ENCODE measurements at regions of chr12 and their contacts with region 1.

Region 1: DNA sequence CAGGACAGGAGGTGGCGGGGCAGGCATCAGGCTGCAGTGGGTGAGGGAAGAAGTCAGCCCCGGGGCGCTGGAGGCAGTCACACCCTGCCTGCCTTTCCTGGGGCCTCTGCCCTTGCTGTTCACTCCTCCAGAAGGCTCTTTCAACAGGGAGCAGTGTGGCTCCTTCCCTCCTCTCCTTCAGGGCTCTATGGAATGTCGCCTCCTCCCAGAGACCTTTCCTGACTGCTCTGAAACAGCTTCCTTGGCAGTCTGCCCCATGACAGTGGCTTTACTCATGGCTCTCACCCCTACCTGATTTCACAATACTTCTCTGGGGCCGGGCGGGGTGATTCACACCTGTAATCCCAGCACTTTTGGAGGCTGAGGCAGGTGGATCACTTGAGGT is 7.1 kb downstream of the RHOF start:
- DNase-seq: no peak
- ATAC-seq: no peak
- H3K4me3 ChIP-seq: no peak overlapping the region
- H3K4me3 Mint-ChIP-seq: peak overlapping the region; percentile 78
- H3K27ac ChIP-seq: peak overlapping the region; percentile 76 to 100
- H3K27ac Mint-ChIP-seq: peak overlapping the region; percentile 95
- H3K4me1 ChIP-seq: peaks cover 87 to 98% of the 10 kb centered on the region in 2 donors
- H3K4me1 Mint-ChIP-seq: peaks cover 89% of the 10 kb centered on the region
- H3K27me3 ChIP-seq: no peaks in the 10 kb centered on the region
- H3K27me3 Mint-ChIP-seq: no peaks in the 10 kb centered on the region
- CTCF ChIP-seq: no peak

Region 2: GRCh38 chr12:121724930-121725329 is 61.5 kb before region 1 on chr12:
- CTCF ChIA-PET with region 1: no interaction called
- POLR2A ChIA-PET with region 1: interaction called, 11 read pairs
- intact Hi-C with region 1: no loop called
- DNase-seq: no peak
- ATAC-seq: no peak
- H3K4me3 ChIP-seq: no peak overlapping the region
- H3K4me3 Mint-ChIP-seq: no peak overlapping the region
- H3K27ac ChIP-seq: no peak overlapping the region
- H3K27ac Mint-ChIP-seq: no peak overlapping the region
- H3K4me1 ChIP-seq: no peaks in the 10 kb centered on the region
- H3K4me1 Mint-ChIP-seq: no peaks in the 10 kb centered on the region
- H3K27me3 ChIP-seq: no peaks in the 10 kb centered on the region
- H3K27me3 Mint-ChIP-seq: no peaks in the 10 kb centered on the region
- CTCF ChIP-seq: no peak

Region 3: DNA sequence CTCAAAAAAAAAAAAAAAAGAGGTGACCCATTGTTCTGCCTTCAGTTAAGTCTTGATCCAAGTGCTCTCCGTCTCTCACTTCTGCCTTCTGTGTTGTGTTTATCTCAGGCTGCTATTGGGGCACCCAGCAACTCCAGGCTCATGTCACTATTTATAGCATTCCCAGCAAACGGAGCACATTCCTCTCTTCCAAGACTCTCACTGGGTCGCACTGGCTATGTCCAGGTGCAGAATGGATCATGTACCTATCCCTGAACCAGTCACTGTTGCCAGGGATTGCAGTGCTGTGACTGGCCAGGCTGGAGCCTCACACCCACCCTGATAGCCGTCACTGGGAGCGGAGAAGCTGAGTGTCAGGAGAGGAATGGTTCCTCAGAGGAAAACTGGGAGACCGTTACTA is 24.2 kb before region 1 on chr12:
- CTCF ChIA-PET with region 1: no interaction called
- POLR2A ChIA-PET with region 1: no interaction called
- intact Hi-C with region 1: no loop called
- DNase-seq: no peak
- ATAC-seq: no peak
- H3K4me3 ChIP-seq: no peak overlapping the region
- H3K4me3 Mint-ChIP-seq: no peak overlapping the region
- H3K27ac ChIP-seq: no peak overlapping the region
- H3K27ac Mint-ChIP-seq: no peak overlapping the region
- H3K4me1 ChIP-seq: no peaks in the 10 kb centered on the region
- H3K4me1 Mint-ChIP-seq: no peaks in the 10 kb centered on the region
- H3K27me3 ChIP-seq: no peaks in the 10 kb centered on the region
- H3K27me3 Mint-ChIP-seq: no peaks in the 10 kb centered on the region
- CTCF ChIP-seq: no peak

Region 4: GRCh38 chr12:121773011-121773777 is 13.2 kb before region 1 on chr12:
- CTCF ChIA-PET with region 1: interaction called, 1,947 read pairs
- POLR2A ChIA-PET with region 1: interaction called, 6 read pairs
- intact Hi-C with region 1: no loop called
- DNase-seq: peak; percentile 87
- ATAC-seq: peak; percentile 96
- H3K4me3 ChIP-seq: no peak overlapping the region
- H3K4me3 Mint-ChIP-seq: no peak overlapping the region
- H3K27ac ChIP-seq: no peak overlapping the region
- H3K27ac Mint-ChIP-seq: peak overlapping the region; percentile 82
- H3K4me1 ChIP-seq: peaks cover 15 to 25% of the 10 kb centered on the region in 2 donors
- H3K4me1 Mint-ChIP-seq: peaks cover 16% of the 10 kb centered on the region
- H3K27me3 ChIP-seq: no peaks in the 10 kb centered on the region
- H3K27me3 Mint-ChIP-seq: no peaks in the 10 kb centered on the region
- CTCF ChIP-seq: peak; percentile 87

Region 5: GRCh38 chr12:121802846-121803630 is 16.6 kb after region 1 on chr12:
- CTCF ChIA-PET with region 1: interaction called, 1,947 read pairs
- POLR2A ChIA-PET with region 1: interaction called, 267 read pairs
- intact Hi-C with region 1: no loop called
- DNase-seq: peak; percentile 98
- ATAC-seq: peak; percentile 51
- H3K4me3 ChIP-seq: peak overlapping the region; percentile 79 to 95 (median 89)
- H3K4me3 Mint-ChIP-seq: peak overlapping the region; percentile 90
- H3K27ac ChIP-seq: peak overlapping the region; percentile 97
- H3K27ac Mint-ChIP-seq: peak overlapping the region; percentile 98
- H3K4me1 ChIP-seq: peaks cover 33 to 53% of the 10 kb centered on the region in 2 donors
- H3K4me1 Mint-ChIP-seq: peaks cover 50% of the 10 kb centered on the region
- H3K27me3 ChIP-seq: no peaks in the 10 kb centered on the region
- H3K27me3 Mint-ChIP-seq: no peaks in the 10 kb centered on the region
- CTCF ChIP-seq: no peak